ENCODE measurements at regions of chr22 and their contacts with region 1.

Region 1: DNA sequence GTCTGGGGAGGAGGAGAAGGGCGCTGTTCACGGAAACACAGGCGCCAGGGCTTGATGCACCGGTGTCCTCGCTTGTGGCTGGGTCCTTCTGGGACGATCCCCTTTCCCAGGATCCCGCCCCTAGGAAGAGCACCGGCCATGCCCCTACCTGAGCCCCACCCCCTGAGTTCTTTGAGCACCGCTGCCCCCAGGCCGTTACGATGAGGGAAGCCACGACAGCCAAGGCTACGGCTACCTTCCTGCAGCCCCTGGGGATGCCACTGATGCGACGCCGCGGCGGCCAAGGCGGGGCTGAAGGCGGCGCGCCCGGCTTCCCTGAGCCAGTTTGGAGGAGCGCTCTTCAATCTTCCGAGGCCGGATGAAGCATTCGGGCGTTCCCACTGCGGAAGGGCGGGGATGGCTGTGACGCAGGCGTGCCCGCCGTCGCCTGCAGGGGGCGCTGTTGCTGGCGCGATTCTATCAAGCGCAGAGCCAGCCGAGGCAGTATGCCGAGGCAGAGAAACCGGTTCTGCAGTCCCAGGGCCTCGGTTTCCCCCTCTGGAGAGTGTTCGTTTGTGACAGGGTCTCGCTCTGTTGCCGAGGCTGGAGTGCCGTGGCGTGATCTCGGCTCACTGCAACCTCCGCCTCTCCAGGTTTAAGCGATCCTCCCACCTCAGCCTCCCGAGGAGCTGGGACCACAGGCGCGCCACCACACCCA is 9.7 kb upstream of the NEFH start:
- DNase-seq: peak; percentile 55 to 81 (median 70)
- ATAC-seq: peak; percentile 99
- H3K4me3 ChIP-seq: peak overlapping the region; percentile 43
- H3K4me3 Mint-ChIP-seq: peak overlapping the region; percentile 77
- H3K27ac ChIP-seq: no peak overlapping the region
- H3K27ac Mint-ChIP-seq: no peak overlapping the region
- H3K4me1 ChIP-seq: peaks cover 10% of the 10 kb centered on the region
- H3K4me1 Mint-ChIP-seq: peaks cover 14% of the 10 kb centered on the region
- H3K27me3 ChIP-seq: peaks cover 0 to 4% of the 10 kb centered on the region in 2 experiments
- H3K27me3 Mint-ChIP-seq: peaks cover 27% of the 10 kb centered on the region
- CTCF ChIP-seq: peak; percentile 85

Region 2: GRCh38 chr22:29431986-29432385 is 38.3 kb before region 1 on chr22:
- CTCF ChIA-PET with region 1: no interaction called
- POLR2A ChIA-PET with region 1: no interaction called
- intact Hi-C with region 1: no loop called
- DNase-seq: no peak
- ATAC-seq: no peak
- H3K4me3 ChIP-seq: no peak overlapping the region
- H3K4me3 Mint-ChIP-seq: no peak overlapping the region
- H3K27ac ChIP-seq: no peak overlapping the region
- H3K27ac Mint-ChIP-seq: no peak overlapping the region
- H3K4me1 ChIP-seq: no peaks in the 10 kb centered on the region
- H3K4me1 Mint-ChIP-seq: no peaks in the 10 kb centered on the region
- H3K27me3 ChIP-seq: peaks cover 0 to 10% of the 10 kb centered on the region in 2 experiments
- H3K27me3 Mint-ChIP-seq: peaks cover 40% of the 10 kb centered on the region
- CTCF ChIP-seq: no peak

Region 3: DNA sequence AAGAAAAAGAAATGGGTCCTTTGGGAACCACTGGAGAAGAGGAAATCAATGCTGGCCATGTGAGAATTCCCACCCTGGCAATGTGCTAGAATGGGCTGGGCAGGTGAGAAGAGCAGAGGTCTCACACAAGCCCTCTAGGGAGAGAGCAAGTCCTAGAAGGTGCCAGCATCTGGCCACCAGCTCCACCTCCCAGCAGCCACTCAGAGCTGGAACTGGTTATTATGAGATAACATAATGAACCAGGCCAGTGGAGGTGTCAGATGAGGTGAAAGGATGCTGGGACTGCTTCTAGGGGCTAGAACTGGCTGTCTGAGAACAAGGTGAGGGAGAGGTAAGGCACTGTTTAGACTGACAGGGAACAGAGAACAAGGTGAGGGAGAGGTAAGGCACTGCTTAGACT is 39.0 kb after region 1 on chr22:
- CTCF ChIA-PET with region 1: no interaction called
- POLR2A ChIA-PET with region 1: no interaction called
- intact Hi-C with region 1: loop called in 1 of 2 experiments (anchors 5 kb)
- DNase-seq: no peak
- ATAC-seq: no peak
- H3K4me3 ChIP-seq: no peak overlapping the region
- H3K4me3 Mint-ChIP-seq: no peak overlapping the region
- H3K27ac ChIP-seq: no peak overlapping the region
- H3K27ac Mint-ChIP-seq: no peak overlapping the region
- H3K4me1 ChIP-seq: no peaks in the 10 kb centered on the region
- H3K4me1 Mint-ChIP-seq: no peaks in the 10 kb centered on the region
- H3K27me3 ChIP-seq: no peaks in the 10 kb centered on the region
- H3K27me3 Mint-ChIP-seq: no peaks in the 10 kb centered on the region
- CTCF ChIP-seq: no peak

Measured in CD4-positive, alpha-beta T cell (primary cell).